Pancreas (tissue), 10 donors: ENCODE measurements at regions of chr1 and their contacts with region 1.

Region 1: GRCh38 chr1:204806943-204807687 is 63.5 kb upstream of the NFASC start:
- DNase-seq: peak; percentile 67 to 90 (median 86)
- ATAC-seq: peak; percentile 98 to 99 (median 98)
- H3K4me3 ChIP-seq: peak overlapping the region in 2 of 4 donors; percentile 33 to 43
- H3K27ac ChIP-seq: no peak overlapping the region
- H3K4me1 ChIP-seq: no peaks in the 10 kb centered on the region
- H3K27me3 ChIP-seq: no peaks in the 10 kb centered on the region
- CTCF ChIP-seq: peak; percentile 90 to 98 (median 98)

Region 2: GRCh38 chr1:204868340-204868700 is 61.2 kb after region 1 on chr1:
- intact Hi-C with region 1: no loop called
- DNase-seq: no peak
- ATAC-seq: peak in 1 of 4 donors; percentile 44
- H3K4me3 ChIP-seq: no peak overlapping the region
- H3K27ac ChIP-seq: no peak overlapping the region
- H3K4me1 ChIP-seq: no peaks in the 10 kb centered on the region
- H3K27me3 ChIP-seq: no peaks in the 10 kb centered on the region
- CTCF ChIP-seq: no peak

Region 3: DNA sequence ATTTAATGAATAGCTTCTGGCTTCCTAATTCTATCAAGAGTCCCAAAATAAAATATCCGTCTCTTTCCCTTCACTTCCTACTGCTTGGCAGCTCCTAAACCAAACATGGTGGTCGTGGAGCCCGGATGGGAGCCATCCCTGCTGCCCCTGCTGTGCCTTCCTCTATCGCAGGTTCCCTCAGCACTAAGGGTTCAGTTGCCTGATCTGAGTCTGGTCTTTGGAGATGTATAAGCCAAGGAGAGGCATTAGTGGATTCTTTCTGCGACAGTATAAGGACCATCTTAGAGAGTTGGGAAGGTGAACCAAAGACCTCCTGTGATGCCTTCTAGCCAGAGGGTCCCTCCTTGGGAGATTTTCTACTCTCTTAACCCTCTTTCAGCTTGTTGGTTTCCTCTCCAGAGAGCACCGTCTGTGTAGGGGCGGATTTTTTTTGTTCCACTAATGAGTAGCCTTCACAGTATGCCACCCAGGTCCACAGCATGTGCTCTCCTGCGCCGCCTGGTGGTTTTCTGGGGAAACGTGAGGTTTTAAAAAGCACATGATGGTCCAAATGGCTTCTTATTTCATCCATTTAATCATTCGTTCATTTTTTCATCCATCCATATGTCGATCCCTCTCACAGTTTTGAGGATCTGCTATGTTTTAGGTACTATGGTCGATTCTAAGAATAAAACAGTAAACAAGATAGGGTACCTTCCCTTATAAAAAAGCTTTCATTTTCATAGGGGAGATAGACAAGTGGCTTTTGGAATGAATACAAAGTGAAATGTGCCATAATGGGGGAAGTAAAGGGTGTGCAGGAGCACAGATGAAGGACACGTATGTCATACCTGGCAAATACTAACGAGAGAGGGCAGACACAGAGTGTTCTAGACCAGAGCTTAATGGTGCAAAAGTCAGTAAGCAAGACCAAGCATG is 134.6 kb after region 1 on chr1:
- intact Hi-C with region 1: loop called in 1 of 3 experiments (anchors 5 kb)
- DNase-seq: peak in 5 of 6 donors; percentile 30 to 84 (median 60)
- ATAC-seq: peak; percentile 72 to 86 (median 84)
- H3K4me3 ChIP-seq: no peak overlapping the region
- H3K27ac ChIP-seq: no peak overlapping the region
- H3K4me1 ChIP-seq: no peaks in the 10 kb centered on the region
- H3K27me3 ChIP-seq: no peaks in the 10 kb centered on the region
- CTCF ChIP-seq: peak; percentile 76 to 87 (median 84)

Region 4: GRCh38 chr1:204971517-204972336 is 164.6 kb after region 1 on chr1:
- intact Hi-C with region 1: no loop called
- DNase-seq: no peak
- ATAC-seq: peak in 2 of 4 donors; percentile 18 to 50
- H3K4me3 ChIP-seq: no peak overlapping the region
- H3K27ac ChIP-seq: no peak overlapping the region
- H3K4me1 ChIP-seq: no peaks in the 10 kb centered on the region
- H3K27me3 ChIP-seq: no peaks in the 10 kb centered on the region
- CTCF ChIP-seq: no peak